ENCODE measurements at regions of chr2 and their contacts with region 1.

Region 1: DNA sequence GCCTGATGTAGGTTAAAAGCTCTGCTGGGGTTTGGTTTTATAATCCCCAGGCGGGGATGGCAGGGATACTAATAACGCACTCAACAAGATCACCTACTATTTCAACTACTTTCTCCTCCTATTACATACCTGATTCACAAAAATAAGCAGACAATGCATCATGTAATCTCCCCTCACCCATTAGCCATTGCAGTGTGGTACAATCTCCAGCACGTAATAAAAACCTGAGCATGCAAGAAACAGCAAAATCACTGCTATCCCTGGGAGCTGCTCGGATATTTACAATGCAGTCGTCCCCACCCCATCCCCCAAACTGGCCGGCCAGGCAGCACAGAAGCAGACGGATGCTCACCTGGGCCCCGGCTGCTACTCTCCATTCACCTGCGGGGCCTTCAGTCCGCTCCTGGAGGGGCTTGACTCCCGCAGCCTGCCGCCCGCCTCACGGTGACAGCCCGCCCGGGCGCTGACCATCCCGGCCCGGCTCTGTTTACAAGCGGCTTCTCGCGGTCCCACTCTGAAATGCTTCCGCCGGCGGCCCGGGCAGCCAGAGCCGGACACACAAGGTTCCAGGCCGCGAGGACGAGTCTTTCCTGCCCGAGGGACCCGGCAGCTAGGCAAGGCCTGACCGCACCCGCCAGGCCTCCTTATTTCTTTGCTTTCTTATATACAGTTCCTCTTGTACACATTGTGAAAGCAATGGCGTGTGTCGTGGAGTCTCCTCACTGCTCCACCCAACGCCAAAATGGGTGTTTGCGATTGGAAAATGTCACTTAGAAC is at the start of gene PLEKHM3:
- DNase-seq: peak; percentile 93
- H3K4me3 ChIP-seq: peak within 1 kb of the TSS; percentile 72 to 90 (median 82)
- H3K27ac ChIP-seq: peak within 1 kb of the TSS; percentile 74 to 82 (median 82)
- H3K4me1 ChIP-seq: peaks cover 19 to 28% (median 25%) of the 10 kb centered on the region in 4 donors
- H3K27me3 ChIP-seq: no peaks in the 10 kb centered on the region
- CTCF ChIP-seq: peak in 2 of 3 experiments; percentile 8 to 22
- EP300 ChIP-seq: no peak
- POLR2A ChIP-seq: no peak
- total RNA-seq, gene PLEKHM3: 24.8 to 34.5 (median 31.1) TPM

Region 2: DNA sequence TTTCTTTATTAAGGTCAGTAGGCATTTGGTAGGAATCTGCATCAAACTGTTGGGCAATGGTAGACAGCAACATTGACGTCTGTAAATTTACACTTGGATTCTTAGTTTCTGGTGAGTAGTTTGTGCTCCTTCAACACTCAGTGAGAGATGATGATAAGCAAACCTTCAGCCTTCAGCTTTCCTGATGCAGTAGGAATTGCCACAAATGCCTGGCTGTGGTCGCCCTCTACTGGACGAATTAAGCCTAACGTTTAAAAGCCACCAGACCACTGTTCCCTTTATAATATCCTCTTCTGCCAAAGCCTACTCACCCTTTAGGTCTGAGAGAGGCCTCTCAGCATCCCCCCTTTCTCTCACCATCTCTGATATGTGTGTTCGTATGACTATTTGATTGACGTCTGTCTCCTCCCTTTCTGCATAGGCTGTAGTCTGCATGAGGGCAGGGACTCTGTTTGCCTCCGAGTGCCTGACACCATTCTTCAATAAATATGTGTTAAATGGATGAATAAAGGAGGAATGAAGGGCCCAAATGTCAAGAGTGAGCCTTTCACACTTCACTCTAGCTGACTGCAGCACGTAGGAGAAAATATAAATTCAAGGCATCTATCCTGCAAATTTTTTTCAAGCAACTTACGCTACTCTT is 47.1 kb after region 1 on chr2:
- intact Hi-C with region 1: loop called (anchors 5 kb)
- DNase-seq: no peak
- H3K4me3 ChIP-seq: no peak overlapping the region
- H3K27ac ChIP-seq: no peak overlapping the region
- H3K4me1 ChIP-seq: no peaks in the 10 kb centered on the region
- H3K27me3 ChIP-seq: peaks cover 0 to 9% (median 0%) of the 10 kb centered on the region in 4 donors
- CTCF ChIP-seq: peak; percentile 59 to 85 (median 69)
- EP300 ChIP-seq: no peak
- POLR2A ChIP-seq: no peak

Region 3: GRCh38 chr2:208156439-208156838 is 131.2 kb after region 1 on chr2:
- intact Hi-C with region 1: no loop called
- DNase-seq: no peak
- H3K4me3 ChIP-seq: no peak overlapping the region
- H3K27ac ChIP-seq: no peak overlapping the region
- H3K4me1 ChIP-seq: no peaks in the 10 kb centered on the region
- H3K27me3 ChIP-seq: no peaks in the 10 kb centered on the region
- CTCF ChIP-seq: no peak
- EP300 ChIP-seq: no peak
- POLR2A ChIP-seq: no peak

Measured in esophagus muscularis mucosa (tissue), 4 donors.